HCT116 (cell line): ENCODE measurements at regions of chr20 and their contacts with region 1.

Region 1: GRCh38 chr20:53738039-53738944 is 144.7 kb upstream of the ZNF217 start:
- DNase-seq: no peak
- ATAC-seq: peak; percentile 59
- H3K4me3 ChIP-seq: no peak overlapping the region
- H3K27ac ChIP-seq: no peak overlapping the region
- H3K4me1 ChIP-seq: peaks cover 5 to 33% of the 10 kb centered on the region in 2 experiments; a peak in 2 of 4 replicates
- H3K27me3 ChIP-seq: no peaks in the 10 kb centered on the region
- CTCF ChIP-seq: no peak
- POLR2A ChIP-seq: no peak
- RAD21 ChIP-seq: no peak

Region 2: DNA sequence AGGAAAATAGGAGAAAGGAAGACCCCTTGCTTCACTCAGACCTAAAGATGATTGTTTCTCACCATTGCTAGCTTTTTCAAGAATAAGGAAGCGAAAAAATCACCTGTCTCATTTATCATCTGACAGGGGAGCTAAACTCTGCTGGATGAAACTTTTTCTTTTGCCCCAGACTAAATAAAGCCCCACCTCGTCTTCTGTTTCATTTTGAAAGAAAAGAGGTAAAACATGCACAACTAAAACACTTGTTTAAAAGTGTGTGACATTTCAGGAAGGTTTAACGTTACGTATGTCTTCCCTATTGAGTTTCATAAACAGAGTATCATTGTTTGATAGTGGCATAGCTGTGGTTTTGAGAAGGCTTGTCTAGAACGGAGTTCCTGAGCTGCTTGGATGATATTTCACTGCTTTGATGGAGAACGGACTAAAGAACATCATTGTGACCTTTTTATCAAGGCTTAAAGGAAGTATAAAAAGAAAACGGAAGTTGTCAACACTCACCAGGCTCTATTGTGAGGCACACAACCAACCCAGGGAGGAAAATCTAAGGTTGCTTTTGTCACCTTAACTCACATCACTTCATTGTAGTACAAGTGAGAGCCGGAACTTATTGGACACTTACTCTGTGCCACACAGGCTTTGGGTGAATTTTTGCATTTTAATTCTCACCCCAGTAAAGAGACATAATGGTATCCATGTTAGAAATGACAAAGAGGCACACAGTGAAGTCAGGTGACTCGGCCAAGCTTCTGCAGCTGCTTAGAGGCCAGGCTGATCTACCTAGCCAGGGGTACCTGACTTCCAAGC is 736.6 kb before region 1 on chr20:
- CTCF ChIA-PET with region 1: no interaction called
- POLR2A ChIA-PET with region 1: no interaction called
- RAD21 ChIA-PET with region 1: no interaction called
- intact Hi-C with region 1: no loop called
- DNase-seq: no peak
- ATAC-seq: no peak
- H3K4me3 ChIP-seq: no peak overlapping the region
- H3K27ac ChIP-seq: no peak overlapping the region
- H3K4me1 ChIP-seq: no peaks in the 10 kb centered on the region
- H3K27me3 ChIP-seq: no peaks in the 10 kb centered on the region
- CTCF ChIP-seq: no peak
- POLR2A ChIP-seq: no peak
- RAD21 ChIP-seq: no peak

Region 3: DNA sequence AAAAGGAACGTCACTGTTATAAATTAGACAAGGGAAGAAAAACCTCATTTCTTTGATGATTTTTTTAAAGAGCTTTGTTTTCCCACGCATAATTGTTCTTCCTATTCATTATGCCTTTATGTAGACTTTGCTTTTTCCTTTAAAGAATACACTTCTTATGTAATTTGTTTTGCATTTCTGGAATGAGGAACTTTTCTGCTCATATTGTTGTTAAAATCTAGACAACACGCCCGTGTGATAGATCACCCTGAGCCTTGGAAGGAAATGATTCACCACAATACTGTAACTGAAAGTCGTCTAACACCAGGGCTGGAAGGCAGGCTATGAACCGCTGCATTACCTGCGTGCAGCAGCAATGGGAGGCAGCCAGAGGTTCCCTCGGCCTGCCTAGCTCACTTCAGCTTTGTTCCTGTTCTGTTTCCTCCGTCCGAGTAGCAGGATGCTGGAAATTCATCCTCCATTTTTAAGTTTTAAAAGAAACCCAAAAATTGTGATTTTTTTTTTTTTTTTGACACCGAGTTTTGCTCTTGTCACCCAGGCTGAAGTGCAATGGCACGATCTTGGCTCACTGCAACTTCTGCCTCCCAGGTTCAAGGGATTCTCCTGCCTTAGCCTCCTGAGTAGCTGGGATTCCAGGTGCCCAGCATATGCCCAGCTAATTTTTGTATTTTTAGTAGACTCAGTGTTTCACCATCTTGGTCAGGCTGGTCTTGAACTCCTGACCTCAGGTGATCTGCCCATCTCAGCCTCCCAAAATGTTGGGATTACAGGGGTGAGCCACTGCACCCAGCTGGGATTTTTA is 95.1 kb before region 1 on chr20:
- CTCF ChIA-PET with region 1: no interaction called
- POLR2A ChIA-PET with region 1: no interaction called
- RAD21 ChIA-PET with region 1: no interaction called
- intact Hi-C with region 1: loop called (anchors 5 kb)
- DNase-seq: peak; percentile 57
- ATAC-seq: peak; percentile 73
- H3K4me3 ChIP-seq: peak overlapping the region in 1 of 2 experiments; percentile 35; a peak in 2 of 4 replicates
- H3K27ac ChIP-seq: peak overlapping the region; percentile 90
- H3K4me1 ChIP-seq: peaks cover 19 to 23% of the 10 kb centered on the region in 2 experiments
- H3K27me3 ChIP-seq: no peaks in the 10 kb centered on the region
- CTCF ChIP-seq: no peak
- POLR2A ChIP-seq: no peak
- RAD21 ChIP-seq: no peak; the same call in 1 of the 2 replicates